ENCODE measurements at regions of chr3 and their contacts with region 1.

Region 1: DNA sequence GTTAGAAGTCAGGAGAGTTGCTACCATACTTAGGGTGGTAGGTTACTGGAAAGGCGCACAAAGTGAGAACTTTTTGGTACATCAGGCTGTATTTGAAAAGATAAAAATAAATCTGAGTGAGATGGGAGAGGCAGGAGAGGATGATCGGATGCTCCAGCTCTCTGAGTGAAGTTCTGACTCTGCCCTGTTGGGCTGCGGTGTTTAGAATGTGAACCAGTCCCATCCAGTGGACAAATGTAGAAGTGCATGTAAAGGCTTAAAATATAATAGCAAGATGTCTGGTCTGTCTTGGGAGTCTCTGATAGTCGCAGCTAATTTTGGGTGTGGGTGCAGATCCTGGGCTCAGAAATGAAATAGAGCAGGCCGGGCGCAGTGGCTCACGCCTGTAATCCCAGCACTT is 30.4 kb downstream of the ACKR2 start:
- DNase-seq: peak; percentile 56
- CTCF ChIP-seq: peak; percentile 67

Region 2: GRCh38 chr3:42780892-42781700 is 58.5 kb before region 1 on chr3:
- CTCF ChIA-PET with region 1: interaction called, 47 read pairs
- POLR2A ChIA-PET with region 1: no interaction called
- DNase-seq: peak; percentile 60
- CTCF ChIP-seq: peak; percentile 58

Region 3: GRCh38 chr3:42804106-42804830 is 35.3 kb before region 1 on chr3 and contains the start of gene HIGD1A:
- CTCF ChIA-PET with region 1: interaction called, 24 read pairs
- POLR2A ChIA-PET with region 1: no interaction called
- DNase-seq: peak; percentile 98
- CTCF ChIP-seq: no peak

Region 4: GRCh38 chr3:42819351-42819965 is 20.2 kb before region 1 on chr3:
- CTCF ChIA-PET with region 1: interaction called, 12 read pairs
- POLR2A ChIA-PET with region 1: no interaction called
- DNase-seq: no peak
- CTCF ChIP-seq: no peak

Region 5: DNA sequence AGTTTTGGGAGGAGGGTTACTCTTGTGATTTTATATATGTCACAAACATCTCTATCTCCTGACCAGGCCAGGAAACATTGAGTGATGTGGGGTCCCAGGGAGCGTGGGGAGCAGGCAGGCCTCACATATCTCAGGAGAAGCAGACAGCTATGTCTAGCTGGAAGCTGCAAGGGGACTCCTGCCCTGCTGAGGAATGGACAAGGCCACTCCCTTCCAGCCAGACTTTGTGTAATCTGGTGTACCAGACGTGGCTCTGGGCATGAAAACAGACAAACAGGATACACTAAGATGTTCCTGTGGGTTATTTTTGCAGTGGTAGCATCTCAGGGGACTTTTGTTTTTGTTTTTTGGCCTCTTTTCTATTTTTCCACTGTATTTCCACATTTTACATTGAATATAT is 12.8 kb after region 1 on chr3:
- CTCF ChIA-PET with region 1: interaction called, 23 read pairs
- POLR2A ChIA-PET with region 1: no interaction called
- DNase-seq: no peak
- CTCF ChIP-seq: no peak

Region 6: DNA sequence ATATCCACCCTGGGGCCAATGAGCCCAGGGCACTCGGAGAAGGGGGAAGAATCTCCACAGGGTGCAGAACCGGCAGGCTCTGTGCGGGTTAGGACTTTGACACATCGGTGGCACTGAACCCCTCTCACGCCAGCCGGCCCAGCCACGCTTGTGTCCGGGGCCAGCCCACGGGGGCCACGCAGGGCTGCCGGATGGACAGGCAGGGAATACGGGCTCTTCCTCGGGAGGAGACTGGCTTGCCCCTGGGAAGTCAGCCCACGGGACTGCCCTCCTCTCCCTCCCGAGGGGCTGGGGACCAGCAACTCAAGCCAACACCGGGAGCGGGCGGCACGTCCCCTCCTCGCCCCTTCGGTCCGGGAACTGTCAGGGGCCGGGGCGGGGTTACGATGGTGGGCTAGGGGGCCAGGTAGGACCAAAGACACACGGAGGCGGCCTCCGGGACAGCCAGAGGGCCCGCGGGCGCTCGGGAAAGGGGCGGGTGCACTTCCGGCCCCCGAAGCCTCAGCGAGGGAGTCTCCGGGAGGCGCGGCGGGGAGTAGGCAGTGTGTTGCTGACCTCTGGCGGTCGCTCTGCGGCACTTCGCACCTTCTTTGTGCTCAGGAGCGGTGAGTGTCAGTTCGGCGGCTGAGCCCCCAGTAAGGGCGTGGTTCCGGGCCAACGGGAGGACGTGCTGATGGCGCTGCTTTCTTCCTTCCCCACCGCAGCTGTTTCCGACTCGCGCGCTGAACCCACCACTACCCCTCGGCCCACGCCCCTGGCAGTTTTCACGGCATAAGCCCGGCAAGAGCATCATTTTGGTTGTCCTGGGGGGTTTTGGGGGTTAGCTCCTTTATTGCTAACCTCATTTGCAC is 41.2 kb after region 1 on chr3:
- CTCF ChIA-PET with region 1: interaction called, 17 read pairs
- POLR2A ChIA-PET with region 1: no interaction called
- DNase-seq: peak; percentile 94
- CTCF ChIP-seq: peak; percentile 95